ENCODE measurements at regions of chr14 and their contacts with region 1.

Region 1: GRCh38 chr14:67943947-67944346 is 124.4 kb downstream of the RAD51B start:
- DNase-seq: peak; percentile 61
- H3K4me3 ChIP-seq: no peak overlapping the region
- H3K27ac ChIP-seq: no peak overlapping the region
- H3K4me1 ChIP-seq: peaks cover 17% of the 10 kb centered on the region
- H3K27me3 ChIP-seq: no peaks in the 10 kb centered on the region
- CTCF ChIP-seq: peak; percentile 63 to 76

Region 2: GRCh38 chr14:67837011-67837624 is 106.8 kb before region 1 on chr14:
- CTCF ChIA-PET with region 1: no interaction called
- dilution Hi-C with region 1: no loop called
- in situ Hi-C with region 1: no loop called
- intact Hi-C with region 1: loop called (anchors 5 kb)
- DNase-seq: peak; percentile 69
- H3K4me3 ChIP-seq: no peak overlapping the region
- H3K27ac ChIP-seq: no peak overlapping the region
- H3K4me1 ChIP-seq: no peaks in the 10 kb centered on the region
- H3K27me3 ChIP-seq: no peaks in the 10 kb centered on the region
- CTCF ChIP-seq: peak; percentile 67 to 76

Region 3: DNA sequence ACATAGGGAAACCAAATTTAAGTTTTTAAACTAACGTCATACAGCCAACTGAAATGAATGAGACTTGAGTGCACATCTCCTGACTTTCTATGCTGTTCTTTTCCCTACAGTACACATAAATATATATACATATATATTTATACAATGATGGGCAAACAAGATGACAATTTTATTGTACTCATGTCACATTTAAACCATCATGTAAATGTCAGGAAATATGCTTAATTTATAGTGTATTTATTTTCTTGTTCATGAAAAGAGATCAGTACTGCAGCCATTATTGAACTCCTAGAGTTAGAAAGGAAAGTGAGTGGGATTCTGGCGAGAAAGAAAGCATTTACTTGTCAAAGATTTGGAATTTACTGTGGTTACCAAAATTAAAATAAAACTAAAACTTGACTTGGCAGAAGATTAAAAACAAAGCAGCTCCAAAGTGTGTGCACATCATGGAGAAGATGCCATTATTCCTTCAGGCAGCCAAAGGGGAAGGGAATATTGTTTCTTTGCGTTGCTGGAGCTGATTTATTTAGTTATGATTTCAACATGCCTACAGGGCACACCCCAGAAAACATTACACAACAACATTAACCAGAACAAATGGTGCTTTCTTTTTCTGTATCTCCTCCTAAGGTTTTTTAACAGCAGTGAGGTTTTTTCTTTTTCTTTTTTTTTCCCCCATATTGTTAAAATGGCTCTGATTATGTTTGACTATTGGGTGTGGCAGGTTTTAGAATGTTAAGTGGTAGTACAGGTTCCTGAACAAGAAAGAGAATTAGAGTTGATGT is 20.2 kb after region 1 on chr14:
- CTCF ChIA-PET with region 1: no interaction called
- dilution Hi-C with region 1: no loop called
- in situ Hi-C with region 1: no loop called
- intact Hi-C with region 1: no loop called
- DNase-seq: peak; percentile 82
- H3K4me3 ChIP-seq: peak overlapping the region; percentile 16 to 32 (median 23)
- H3K27ac ChIP-seq: peak overlapping the region; percentile 90
- H3K4me1 ChIP-seq: peaks cover 14% of the 10 kb centered on the region
- H3K27me3 ChIP-seq: no peaks in the 10 kb centered on the region
- CTCF ChIP-seq: no peak

Region 4: DNA sequence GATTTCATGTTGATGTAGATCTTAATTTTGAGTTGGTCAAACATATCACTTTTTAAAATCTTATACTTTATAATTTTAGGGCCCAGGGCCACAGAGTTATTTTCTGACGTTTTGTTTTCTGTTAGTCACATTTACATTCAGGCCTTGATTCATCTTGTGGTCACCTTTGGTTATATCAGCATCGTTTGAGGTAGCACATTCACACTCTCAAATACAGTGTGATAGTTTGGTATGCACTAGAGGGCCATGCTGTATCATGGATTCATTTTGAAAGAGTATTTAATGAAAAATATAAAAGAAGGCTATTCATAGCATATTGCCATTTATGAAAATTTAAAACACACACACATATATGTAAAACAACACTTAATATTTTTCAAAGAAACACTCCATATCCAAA is 150.2 kb after region 1 on chr14:
- CTCF ChIA-PET with region 1: no interaction called
- dilution Hi-C with region 1: no loop called
- in situ Hi-C with region 1: no loop called
- intact Hi-C with region 1: loop called (anchors 2 kb)
- DNase-seq: peak; percentile 71
- H3K4me3 ChIP-seq: no peak overlapping the region
- H3K27ac ChIP-seq: no peak overlapping the region
- H3K4me1 ChIP-seq: no peaks in the 10 kb centered on the region
- H3K27me3 ChIP-seq: no peaks in the 10 kb centered on the region
- CTCF ChIP-seq: peak in 1 of 2 donors; percentile 34

Region 5: GRCh38 chr14:68137704-68138619 is 194.0 kb after region 1 on chr14:
- CTCF ChIA-PET with region 1: interaction called, 3 read pairs
- dilution Hi-C with region 1: no loop called
- in situ Hi-C with region 1: no loop called
- intact Hi-C with region 1: loop called (anchors 2 kb)
- DNase-seq: peak; percentile 99
- H3K4me3 ChIP-seq: no peak overlapping the region
- H3K27ac ChIP-seq: peak overlapping the region; percentile 99
- H3K4me1 ChIP-seq: peaks cover 63% of the 10 kb centered on the region
- H3K27me3 ChIP-seq: no peaks in the 10 kb centered on the region
- CTCF ChIP-seq: no peak

Region 6: DNA sequence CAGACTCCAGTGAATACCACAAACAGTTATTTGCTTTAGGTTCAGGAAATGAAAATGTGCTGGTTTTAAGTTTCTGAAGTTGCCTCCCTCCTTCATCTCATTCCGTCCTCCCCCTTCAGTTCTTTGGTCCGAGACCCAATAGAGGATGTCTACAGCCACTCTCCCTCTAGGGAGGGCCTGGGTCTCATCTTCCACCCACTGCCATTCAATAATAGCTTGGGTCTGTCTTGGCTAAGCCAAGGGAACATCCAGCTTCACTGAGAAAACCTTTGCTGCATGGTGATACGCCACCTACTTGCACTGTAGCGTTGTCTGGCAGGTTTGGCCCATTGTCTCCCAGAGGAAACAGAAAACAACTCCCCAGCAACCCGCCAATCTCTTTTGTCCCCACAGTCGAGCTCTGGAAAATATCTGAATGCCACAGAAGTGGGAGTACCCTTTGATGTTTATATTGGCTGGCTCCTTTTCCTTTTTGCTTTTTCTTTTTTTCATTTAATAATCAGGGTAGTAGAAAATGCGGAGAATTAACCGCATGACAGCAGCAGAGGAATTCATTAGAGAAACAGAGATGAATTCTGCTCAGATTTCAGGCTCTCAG is 255.7 kb after region 1 on chr14:
- CTCF ChIA-PET with region 1: no interaction called
- dilution Hi-C with region 1: no loop called
- in situ Hi-C with region 1: no loop called
- intact Hi-C with region 1: no loop called
- DNase-seq: no peak
- H3K4me3 ChIP-seq: no peak overlapping the region
- H3K27ac ChIP-seq: no peak overlapping the region
- H3K4me1 ChIP-seq: no peaks in the 10 kb centered on the region
- H3K27me3 ChIP-seq: no peaks in the 10 kb centered on the region
- CTCF ChIP-seq: no peak

Region 7: GRCh38 chr14:68408680-68409079 is 464.7 kb after region 1 on chr14:
- CTCF ChIA-PET with region 1: no interaction called
- dilution Hi-C with region 1: no loop called
- in situ Hi-C with region 1: loop called in 1 of 2 experiments (anchors 25 kb)
- intact Hi-C with region 1: no loop called
- DNase-seq: no peak
- H3K4me3 ChIP-seq: no peak overlapping the region
- H3K27ac ChIP-seq: no peak overlapping the region
- H3K4me1 ChIP-seq: peaks cover 44% of the 10 kb centered on the region
- H3K27me3 ChIP-seq: no peaks in the 10 kb centered on the region
- CTCF ChIP-seq: no peak